ENCODE measurements at regions of chr10 and their contacts with region 1.

Region 1: DNA sequence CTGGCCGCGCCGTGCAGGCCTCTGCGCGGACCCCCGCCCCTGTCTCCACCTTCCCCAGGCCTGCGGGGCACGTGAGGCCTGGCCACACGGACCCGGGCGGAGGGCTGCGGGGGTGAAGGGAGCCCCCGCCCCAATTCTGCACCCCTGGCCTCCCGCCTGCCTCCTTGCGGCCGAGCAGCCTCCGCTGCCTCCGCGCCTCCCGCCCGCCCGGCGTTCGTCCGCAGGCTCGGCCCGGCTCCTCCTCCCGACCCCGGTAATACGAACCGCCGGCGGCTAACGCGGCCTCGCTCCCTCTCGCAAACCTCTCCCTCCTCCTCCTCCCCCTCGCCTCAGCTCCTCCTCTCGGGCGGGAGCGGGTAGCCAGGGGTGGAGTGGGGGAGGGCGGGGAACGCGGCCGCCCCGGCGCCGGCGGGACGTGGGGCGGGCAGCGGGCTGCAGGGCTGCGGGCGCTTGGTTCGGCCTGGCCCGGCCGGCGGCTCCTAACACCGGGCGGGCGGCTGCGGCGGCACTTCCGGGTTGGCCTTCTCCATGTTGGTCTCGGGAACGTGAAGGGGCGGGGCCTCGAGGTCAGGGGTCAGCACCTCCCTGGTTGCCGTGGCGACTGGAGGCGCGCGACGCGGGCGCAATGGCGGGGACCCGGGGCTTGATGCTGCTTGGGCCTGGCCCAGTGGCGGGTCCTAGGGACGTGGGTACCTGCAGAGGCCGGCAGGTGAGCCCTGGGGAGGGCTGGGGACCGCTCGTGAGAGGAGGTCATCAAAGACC is at the start of gene RAB11FIP2:
- DNase-seq: peak; percentile 94 to 99
- H3K4me3 ChIP-seq: peak within 1 kb of the TSS; percentile 75
- CTCF ChIP-seq: no peak
- POLR2A ChIP-seq: peak in 1 of 2 donors; percentile 5
- total RNA-seq, gene RAB11FIP2: 7.3 to 18.2 (median 14.1) TPM

Region 2: GRCh38 chr10:119737827-119738226 is 1691.3 kb after region 1 on chr10:
- intact Hi-C with region 1: loop called (anchors 5 kb)
- DNase-seq: peak in 1 of 2 donors; percentile 28
- H3K4me3 ChIP-seq: no peak overlapping the region
- CTCF ChIP-seq: no peak
- POLR2A ChIP-seq: no peak